ENCODE measurements at regions of chr12 and their contacts with region 1.

Region 1: GRCh38 chr12:11658791-11659190 is 9.3 kb downstream of the ETV6 start:
- DNase-seq: no peak
- H3K4me3 ChIP-seq: no peak overlapping the region
- H3K27ac ChIP-seq: peak overlapping the region; percentile 41 to 98 (median 94)
- H3K4me1 ChIP-seq: peaks cover 68 to 97% (median 94%) of the 10 kb centered on the region in 4 donors
- H3K27me3 ChIP-seq: no peaks in the 10 kb centered on the region
- CTCF ChIP-seq: no peak
- EP300 ChIP-seq: no peak
- POLR2A ChIP-seq: no peak

Region 2: DNA sequence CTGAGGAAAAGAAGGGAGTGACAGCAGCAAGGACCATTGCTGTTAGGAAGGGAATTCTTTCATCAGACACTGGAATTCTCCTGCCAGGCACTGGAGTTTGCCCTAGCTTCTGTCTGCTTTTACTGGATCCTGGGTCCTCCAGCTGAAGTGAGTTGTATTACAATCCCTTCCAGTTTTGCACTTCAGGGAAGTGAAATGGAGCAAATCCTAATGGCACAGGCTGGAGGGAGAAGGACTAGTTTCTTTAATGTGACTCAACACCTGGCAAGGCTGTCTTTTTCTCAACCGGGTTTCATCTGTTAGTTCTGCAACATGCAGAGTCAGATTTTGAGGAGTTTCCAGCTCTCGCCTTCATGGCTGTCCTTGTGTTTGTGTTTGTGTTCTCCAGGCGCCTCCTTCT is 36.5 kb after region 1 on chr12:
- intact Hi-C with region 1: loop called (anchors 5 kb)
- DNase-seq: no peak
- H3K4me3 ChIP-seq: no peak overlapping the region
- H3K27ac ChIP-seq: peak overlapping the region; percentile 42 to 71 (median 66)
- H3K4me1 ChIP-seq: peaks cover 0 to 71% (median 67%) of the 10 kb centered on the region in 4 donors
- H3K27me3 ChIP-seq: no peaks in the 10 kb centered on the region
- CTCF ChIP-seq: no peak
- EP300 ChIP-seq: no peak
- POLR2A ChIP-seq: no peak